ENCODE measurements at regions of chr16 and their contacts with region 1.

Region 1: GRCh38 chr16:75519881-75520280 is 16.0 kb downstream of the CHST5 start:
- DNase-seq: peak; percentile 29
- H3K4me3 ChIP-seq: no peak overlapping the region
- H3K27ac ChIP-seq: no peak overlapping the region
- H3K4me1 ChIP-seq: peaks cover 7% of the 10 kb centered on the region
- H3K27me3 ChIP-seq: no peaks in the 10 kb centered on the region
- CTCF ChIP-seq: no peak

Region 2: DNA sequence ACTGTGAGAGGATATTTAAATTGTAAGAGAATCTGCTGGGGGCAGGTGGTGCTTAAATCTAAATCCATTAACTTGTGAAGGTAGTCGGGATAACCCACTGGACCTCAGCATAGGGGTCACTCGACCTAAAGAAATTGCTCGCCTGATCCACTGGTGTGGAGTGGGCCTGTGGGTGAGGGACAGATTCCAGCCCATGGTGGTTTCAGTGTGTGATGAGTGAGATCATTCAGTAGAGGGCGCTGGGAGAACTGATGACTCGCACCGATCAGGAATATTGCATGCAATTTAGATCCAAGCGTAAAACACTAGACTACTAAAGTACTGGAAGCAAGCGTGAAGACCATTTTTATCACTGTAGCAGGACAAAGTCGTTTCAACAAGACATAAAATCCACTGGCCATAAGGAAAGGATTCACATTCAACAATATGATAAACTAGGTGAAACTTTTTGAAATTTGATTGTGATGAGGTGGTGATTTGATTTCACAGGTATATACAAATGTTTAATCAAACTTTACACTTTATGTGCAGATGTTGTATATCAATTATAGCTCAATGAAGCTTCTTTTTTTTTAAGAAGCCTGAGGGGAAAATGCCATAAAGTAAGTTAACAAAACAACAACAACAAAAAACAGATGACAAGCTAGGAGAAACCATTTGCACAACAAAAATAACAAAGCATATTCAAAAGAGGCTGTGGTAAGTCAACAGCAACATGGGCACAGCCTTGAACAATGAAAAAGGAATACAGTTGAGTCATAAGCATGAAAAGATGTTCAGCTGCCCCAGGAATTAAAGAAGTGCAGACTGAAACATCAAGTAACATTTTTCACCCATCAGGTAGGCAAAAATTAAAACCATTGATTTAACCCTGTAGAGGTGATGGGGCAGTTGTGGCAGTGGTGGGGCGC is 47.9 kb before region 1 on chr16:
- CTCF ChIA-PET with region 1: no interaction called
- dilution Hi-C with region 1: no loop called
- in situ Hi-C with region 1: loop called in 1 of 2 experiments (anchors 5 kb)
- intact Hi-C with region 1: loop called (anchors 1 kb)
- DNase-seq: peak; percentile 55
- H3K4me3 ChIP-seq: no peak overlapping the region
- H3K27ac ChIP-seq: no peak overlapping the region
- H3K4me1 ChIP-seq: peaks cover 6% of the 10 kb centered on the region
- H3K27me3 ChIP-seq: no peaks in the 10 kb centered on the region
- CTCF ChIP-seq: peak; percentile 78 to 80

Region 3: DNA sequence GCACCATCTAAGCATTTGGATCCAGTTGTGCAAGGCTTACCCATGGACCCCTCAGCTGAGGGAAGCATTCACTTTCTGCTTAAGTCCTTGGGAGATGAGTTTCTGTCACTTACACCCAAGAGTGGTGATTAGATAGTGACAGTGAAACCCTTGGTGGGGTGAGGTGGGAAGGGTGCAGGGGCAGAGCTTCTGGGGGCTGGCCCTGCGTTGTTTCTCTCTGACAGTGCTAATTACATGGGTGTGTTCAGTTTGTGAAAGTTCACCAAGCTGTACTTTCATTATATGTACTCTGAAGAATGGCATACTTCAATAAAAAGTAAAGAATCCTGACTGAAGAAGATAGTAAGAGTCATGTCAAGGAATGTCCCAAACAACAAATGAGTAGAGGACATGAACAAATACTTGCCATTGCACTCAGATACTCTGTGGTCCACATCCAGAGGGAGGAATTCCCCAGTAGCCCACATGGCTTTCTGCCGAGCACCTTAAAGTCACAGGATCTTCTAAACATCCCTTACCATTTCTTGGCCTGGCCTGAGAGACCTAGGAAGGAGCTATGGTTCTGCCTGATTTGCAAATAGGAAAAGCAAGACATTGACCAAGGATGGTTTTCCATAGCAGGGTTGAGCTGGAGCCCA is 33.1 kb before region 1 on chr16:
- CTCF ChIA-PET with region 1: interaction called, 22 read pairs
- dilution Hi-C with region 1: no loop called
- in situ Hi-C with region 1: loop called in 1 of 2 experiments (anchors 5 kb)
- intact Hi-C with region 1: loop called (anchors 1 kb)
- DNase-seq: peak; percentile 32
- H3K4me3 ChIP-seq: no peak overlapping the region
- H3K27ac ChIP-seq: no peak overlapping the region
- H3K4me1 ChIP-seq: peaks cover 45% of the 10 kb centered on the region
- H3K27me3 ChIP-seq: no peaks in the 10 kb centered on the region
- CTCF ChIP-seq: no peak

Region 4: GRCh38 chr16:75534560-75535205 is 14.8 kb after region 1 on chr16:
- CTCF ChIA-PET with region 1: no interaction called
- dilution Hi-C with region 1: no loop called
- in situ Hi-C with region 1: no loop called
- intact Hi-C with region 1: no loop called
- DNase-seq: no peak
- H3K4me3 ChIP-seq: no peak overlapping the region
- H3K27ac ChIP-seq: no peak overlapping the region
- H3K4me1 ChIP-seq: no peaks in the 10 kb centered on the region
- H3K27me3 ChIP-seq: no peaks in the 10 kb centered on the region
- CTCF ChIP-seq: no peak

Region 5: DNA sequence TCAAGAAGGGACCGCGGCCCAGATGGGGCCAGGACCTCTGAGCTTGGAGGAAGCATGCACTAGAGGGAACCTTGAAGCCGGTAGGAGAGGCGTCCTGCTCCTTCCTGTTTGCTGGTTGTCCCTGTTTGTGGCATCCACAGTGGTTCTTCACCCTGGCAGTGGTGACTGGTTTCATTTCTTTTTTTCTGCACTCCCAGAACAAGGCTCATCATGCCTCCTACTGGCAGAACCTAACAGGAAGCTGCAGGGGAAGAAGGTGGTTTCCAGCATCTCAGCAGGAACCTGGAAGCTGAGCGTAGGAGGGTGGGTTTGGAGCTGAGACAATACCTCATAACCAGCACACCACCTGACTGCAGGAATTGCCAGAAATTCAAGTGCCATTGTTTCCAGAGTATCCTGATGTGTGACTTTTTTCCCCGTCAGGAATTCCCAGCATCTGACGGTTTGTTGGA is 30.4 kb after region 1 on chr16:
- CTCF ChIA-PET with region 1: interaction called, 12 read pairs
- dilution Hi-C with region 1: no loop called
- in situ Hi-C with region 1: no loop called
- intact Hi-C with region 1: loop called (anchors 1 kb)
- DNase-seq: peak; percentile 88
- H3K4me3 ChIP-seq: peak overlapping the region; percentile 10 to 38 (median 37)
- H3K27ac ChIP-seq: peak overlapping the region; percentile 52
- H3K4me1 ChIP-seq: peaks cover 6% of the 10 kb centered on the region
- H3K27me3 ChIP-seq: no peaks in the 10 kb centered on the region
- CTCF ChIP-seq: peak; percentile 85 to 96

Region 6: GRCh38 chr16:75576384-75576811 is 56.5 kb after region 1 on chr16:
- CTCF ChIA-PET with region 1: no interaction called
- dilution Hi-C with region 1: no loop called
- in situ Hi-C with region 1: no loop called
- intact Hi-C with region 1: no loop called
- DNase-seq: no peak
- H3K4me3 ChIP-seq: no peak overlapping the region
- H3K27ac ChIP-seq: no peak overlapping the region
- H3K4me1 ChIP-seq: no peaks in the 10 kb centered on the region
- H3K27me3 ChIP-seq: no peaks in the 10 kb centered on the region
- CTCF ChIP-seq: no peak

Region 7: GRCh38 chr16:75632857-75633256 is 113.0 kb after region 1 on chr16:
- CTCF ChIA-PET with region 1: no interaction called
- dilution Hi-C with region 1: no loop called
- in situ Hi-C with region 1: no loop called
- intact Hi-C with region 1: no loop called
- DNase-seq: no peak
- H3K4me3 ChIP-seq: no peak overlapping the region
- H3K27ac ChIP-seq: no peak overlapping the region
- H3K4me1 ChIP-seq: no peaks in the 10 kb centered on the region
- H3K27me3 ChIP-seq: no peaks in the 10 kb centered on the region
- CTCF ChIP-seq: no peak

Region 8: DNA sequence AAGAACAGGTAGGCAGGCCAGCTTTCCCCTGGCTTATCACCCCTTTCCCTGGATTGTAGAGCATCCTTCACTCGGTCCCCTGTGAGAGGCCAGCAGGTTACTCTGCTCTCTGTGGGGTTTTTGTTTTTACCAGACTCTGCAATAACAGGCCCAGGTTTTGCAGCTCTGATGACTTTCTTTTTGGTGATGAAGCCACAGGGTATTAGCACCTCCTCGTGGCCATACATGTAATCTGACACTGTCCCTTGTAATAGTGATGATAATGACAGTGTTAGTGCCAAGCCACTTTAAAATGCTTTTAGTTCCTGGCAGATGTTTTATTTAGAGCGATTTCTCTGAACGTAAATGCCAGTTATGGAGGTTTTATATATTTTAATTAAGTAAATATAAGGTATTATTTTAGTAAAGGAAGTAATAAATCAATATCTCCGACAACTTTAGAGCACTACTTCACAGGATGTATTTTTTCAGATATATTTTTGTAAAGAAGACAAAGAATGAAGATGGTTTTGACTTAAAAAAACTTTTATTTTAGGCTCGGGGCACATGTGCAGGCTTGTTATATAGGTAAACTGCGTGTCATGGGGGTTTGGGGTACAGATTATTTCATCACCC is 244.4 kb after region 1 on chr16:
- CTCF ChIA-PET with region 1: no interaction called
- dilution Hi-C with region 1: no loop called
- in situ Hi-C with region 1: no loop called
- intact Hi-C with region 1: loop called (anchors 1 kb)
- DNase-seq: peak; percentile 53
- H3K4me3 ChIP-seq: no peak overlapping the region
- H3K27ac ChIP-seq: no peak overlapping the region
- H3K4me1 ChIP-seq: no peaks in the 10 kb centered on the region
- H3K27me3 ChIP-seq: no peaks in the 10 kb centered on the region
- CTCF ChIP-seq: peak; percentile 83 to 88

Measured in mammary epithelial cell (primary cell).